Heart left ventricle (tissue), 16 donors: ENCODE measurements at regions of chr10 and their contacts with region 1.

Region 1: GRCh38 chr10:80199828-80200227 is 5.5 kb downstream of the ANXA11 start:
- DNase-seq: peak in 4 of 5 donors; percentile 46 to 74 (median 72)
- ATAC-seq: peak; percentile 16 to 56 (median 32)
- H3K4me3 ChIP-seq: peak overlapping the region in 11 of 12 donors; percentile 4 to 98 (median 16)
- H3K27ac ChIP-seq: peak overlapping the region; percentile 96 to 100 (median 99)
- H3K4me1 ChIP-seq: peaks cover 29 to 97% (median 91%) of the 10 kb centered on the region in 12 donors
- H3K27me3 ChIP-seq: no peaks in the 10 kb centered on the region
- CTCF ChIP-seq: peak; percentile 8 to 43 (median 25)
- POLR2A ChIP-seq: no peak

Region 2: GRCh38 chr10:80168679-80169380 is 31.0 kb before region 1 on chr10:
- intact Hi-C with region 1: loop called in 3 of 10 experiments (anchors 2 to 5 kb)
- DNase-seq: peak in 1 of 5 donors; percentile 27
- ATAC-seq: peak in 3 of 4 donors; percentile 4 to 7 (median 7)
- H3K4me3 ChIP-seq: no peak overlapping the region
- H3K27ac ChIP-seq: peak overlapping the region in 9 of 12 donors; percentile 15 to 79 (median 68)
- H3K4me1 ChIP-seq: peaks cover 15 to 99% (median 72%) of the 10 kb centered on the region in 12 donors
- H3K27me3 ChIP-seq: no peaks in the 10 kb centered on the region
- CTCF ChIP-seq: peak in 7 of 12 donors; percentile 11 to 35 (median 25)
- POLR2A ChIP-seq: no peak

Region 3: GRCh38 chr10:80185584-80186299 is 14.1 kb before region 1 on chr10:
- intact Hi-C with region 1: loop called in 1 of 10 experiments (anchors 2 kb)
- DNase-seq: no peak
- ATAC-seq: peak; percentile 65 to 82 (median 75)
- H3K4me3 ChIP-seq: no peak overlapping the region
- H3K27ac ChIP-seq: peak overlapping the region; percentile 28 to 93 (median 80)
- H3K4me1 ChIP-seq: peaks cover 9 to 94% (median 81%) of the 10 kb centered on the region in 12 donors
- H3K27me3 ChIP-seq: no peaks in the 10 kb centered on the region
- CTCF ChIP-seq: no peak
- POLR2A ChIP-seq: no peak